ENCODE measurements at regions of chr7 and their contacts with region 1.

Region 1: DNA sequence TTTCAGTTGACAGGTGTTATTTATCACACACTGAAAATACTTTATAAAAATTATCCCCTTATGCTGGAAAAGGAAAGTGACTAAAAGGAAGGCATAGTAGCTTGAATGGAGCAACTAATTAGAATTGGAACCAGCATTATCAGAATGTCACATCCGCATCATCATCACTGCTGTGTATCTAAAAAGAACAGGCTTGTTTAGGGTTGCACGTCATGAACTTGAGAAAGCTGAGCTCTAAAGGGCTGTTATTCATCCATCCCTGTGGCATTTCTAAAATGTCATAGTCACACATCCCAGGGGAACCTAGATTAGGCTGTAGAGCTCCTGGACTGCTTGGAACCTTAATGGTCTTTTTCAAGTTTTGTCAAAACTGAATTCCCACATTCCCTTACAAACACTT is 54.4 kb downstream of the KLHDC10 start:
- DNase-seq: no peak
- H3K4me3 ChIP-seq: no peak overlapping the region
- H3K27ac ChIP-seq: no peak overlapping the region
- H3K4me1 ChIP-seq: no peaks in the 10 kb centered on the region
- CTCF ChIP-seq: no peak

Region 2: DNA sequence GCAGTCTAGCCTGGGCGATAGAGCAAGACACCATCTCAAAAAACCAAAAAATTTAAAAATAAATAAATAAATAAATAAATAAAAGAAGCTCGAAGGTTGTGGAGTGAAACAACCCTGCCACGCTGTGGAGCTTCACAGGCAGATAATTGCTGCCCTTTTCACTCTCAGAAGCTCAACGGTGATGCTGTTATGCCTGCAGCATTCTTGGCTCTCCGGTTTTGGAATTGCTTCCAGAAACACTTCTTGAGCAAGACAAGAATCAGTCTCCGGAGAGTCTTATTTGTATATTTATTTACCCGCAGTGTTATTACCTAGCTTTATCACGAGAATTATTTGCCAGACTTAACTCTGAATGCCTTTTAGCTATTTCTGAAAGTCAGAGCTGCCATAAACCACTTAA is 131.4 kb before region 1 on chr7:
- CTCF ChIA-PET with region 1: no interaction called
- POLR2A ChIA-PET with region 1: no interaction called
- intact Hi-C with region 1: no loop called
- DNase-seq: no peak
- H3K4me3 ChIP-seq: no peak overlapping the region
- H3K27ac ChIP-seq: no peak overlapping the region
- H3K4me1 ChIP-seq: no peaks in the 10 kb centered on the region
- CTCF ChIP-seq: no peak

Region 3: GRCh38 chr7:130024390-130024789 is 100.3 kb before region 1 on chr7:
- CTCF ChIA-PET with region 1: no interaction called
- POLR2A ChIA-PET with region 1: no interaction called
- intact Hi-C with region 1: no loop called
- DNase-seq: no peak
- H3K4me3 ChIP-seq: no peak overlapping the region
- H3K27ac ChIP-seq: no peak overlapping the region
- H3K4me1 ChIP-seq: no peaks in the 10 kb centered on the region
- CTCF ChIP-seq: no peak

Region 4: DNA sequence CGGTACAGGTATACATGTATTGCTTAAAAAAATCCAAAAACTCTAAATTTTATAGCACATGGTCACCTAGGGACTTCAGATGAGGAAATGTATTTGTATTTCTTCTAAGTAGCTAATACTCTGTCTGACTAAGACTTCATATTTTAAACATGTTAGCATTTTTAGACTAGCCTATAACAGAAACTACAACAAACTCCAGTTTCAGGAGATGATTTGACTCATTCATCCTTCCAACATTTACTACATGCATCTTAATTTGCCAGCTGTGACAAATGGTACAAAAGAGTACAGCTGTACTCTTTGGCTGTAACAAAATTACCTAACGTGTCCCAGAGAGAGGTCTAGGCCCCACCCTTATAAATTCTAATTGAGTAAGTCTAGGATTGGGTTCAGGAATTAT is 58.3 kb after region 1 on chr7:
- CTCF ChIA-PET with region 1: no interaction called
- POLR2A ChIA-PET with region 1: no interaction called
- intact Hi-C with region 1: loop called (anchors 5 kb)
- DNase-seq: no peak
- H3K4me3 ChIP-seq: no peak overlapping the region
- H3K27ac ChIP-seq: no peak overlapping the region
- H3K4me1 ChIP-seq: no peaks in the 10 kb centered on the region
- CTCF ChIP-seq: no peak

Region 5: GRCh38 chr7:130695840-130696239 is 571.1 kb after region 1 on chr7:
- CTCF ChIA-PET with region 1: no interaction called
- POLR2A ChIA-PET with region 1: no interaction called
- intact Hi-C with region 1: no loop called
- DNase-seq: peak; percentile 18
- H3K4me3 ChIP-seq: no peak overlapping the region
- H3K27ac ChIP-seq: no peak overlapping the region
- H3K4me1 ChIP-seq: no peaks in the 10 kb centered on the region
- CTCF ChIP-seq: peak; percentile 73

Measured in OCI-LY7 (cell line).